Dendritic cell treated with granulocyte-macrophage colony-stimulating factor and Interleukin-4, amounts not matched to agents 40 ng/mL and 50 ng/mL, for 4 days (primary cell): ENCODE measurements at regions of chr3 and their contacts with region 1.

Region 1: GRCh38 chr3:172530566-172530965 is 7.3 kb upstream of the TNFSF10 start:
- H3K4me3 Mint-ChIP-seq: no peak overlapping the region
- H3K27ac Mint-ChIP-seq: peak overlapping the region; percentile 64
- H3K4me1 Mint-ChIP-seq: peaks cover 9% of the 10 kb centered on the region
- H3K27me3 Mint-ChIP-seq: no peaks in the 10 kb centered on the region

Region 2: DNA sequence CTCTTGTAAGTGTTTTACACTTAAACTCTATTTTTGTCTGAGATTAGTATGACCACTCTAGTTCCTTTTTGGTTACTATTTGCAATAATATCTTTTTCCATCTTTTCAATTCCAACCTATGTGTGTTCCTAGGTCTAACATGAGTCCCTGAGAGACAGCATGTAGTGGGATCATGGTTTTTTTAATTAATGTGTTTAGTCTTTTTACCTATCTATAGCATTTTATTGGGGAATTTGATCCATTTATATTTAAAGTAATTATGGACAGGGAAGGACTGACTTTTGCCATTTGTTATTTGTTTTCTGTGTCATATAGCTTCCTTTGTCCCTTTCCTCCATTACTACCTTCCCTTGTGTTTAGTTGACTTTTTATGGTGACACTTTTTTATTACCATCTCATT is 29.0 kb before region 1 on chr3:
- intact Hi-C with region 1: loop called (anchors 5 kb)
- H3K4me3 Mint-ChIP-seq: no peak overlapping the region
- H3K27ac Mint-ChIP-seq: no peak overlapping the region
- H3K4me1 Mint-ChIP-seq: peaks cover 4% of the 10 kb centered on the region
- H3K27me3 Mint-ChIP-seq: peaks cover 2% of the 10 kb centered on the region